ENCODE measurements at regions of chr6 and their contacts with region 1.

Region 1: DNA sequence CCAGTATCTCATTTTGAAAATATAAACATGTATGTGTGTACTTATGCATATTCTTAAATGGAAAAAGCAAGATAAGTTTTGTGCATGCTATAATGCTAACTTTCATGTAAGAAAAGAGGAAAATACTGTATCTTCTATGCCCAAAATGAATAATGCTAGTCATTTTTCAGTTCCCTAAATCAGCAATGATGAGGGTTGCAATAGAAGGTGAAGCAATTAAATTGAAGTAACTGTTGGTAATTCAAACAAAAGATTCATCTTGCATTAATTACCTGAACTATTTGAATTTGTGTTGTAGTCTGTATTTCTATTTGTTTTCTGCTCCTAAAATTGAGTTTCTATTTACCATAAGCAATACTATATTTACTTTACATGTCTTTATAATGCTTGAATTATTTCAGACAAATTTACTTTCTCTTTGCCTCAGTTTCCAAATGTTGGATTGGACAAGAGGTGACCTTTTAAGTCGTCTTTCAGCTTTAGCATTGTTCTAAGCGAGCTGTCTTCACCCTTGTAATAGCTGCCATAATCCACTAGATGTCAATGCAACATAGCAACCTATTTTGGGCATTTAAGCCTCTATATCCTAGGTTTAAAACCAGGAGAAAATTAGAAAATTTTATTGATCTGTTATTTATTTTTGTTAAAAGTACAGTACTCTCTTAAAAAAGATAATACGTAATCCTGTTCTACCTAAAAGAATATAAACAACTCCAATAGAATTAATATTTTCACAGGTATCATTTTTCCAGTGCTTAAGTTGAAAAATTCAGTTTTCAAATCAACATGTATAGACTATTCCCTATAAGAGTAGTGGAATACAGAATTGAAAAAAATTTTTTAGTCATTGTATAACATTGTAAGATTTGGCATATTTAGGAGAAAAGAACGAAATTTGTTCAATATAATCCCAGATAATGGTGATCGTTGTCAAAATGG is 52.3 kb upstream of the IFNGR1 start:
- DNase-seq: peak; percentile 42
- ATAC-seq: peak; percentile 86
- H3K4me3 ChIP-seq: no peak overlapping the region
- H3K27ac ChIP-seq: no peak overlapping the region
- H3K4me1 ChIP-seq: no peaks in the 10 kb centered on the region
- H3K27me3 ChIP-seq: no peaks in the 10 kb centered on the region
- CTCF ChIP-seq: peak; percentile 86; the same call in 1 of the 2 replicates

Region 2: DNA sequence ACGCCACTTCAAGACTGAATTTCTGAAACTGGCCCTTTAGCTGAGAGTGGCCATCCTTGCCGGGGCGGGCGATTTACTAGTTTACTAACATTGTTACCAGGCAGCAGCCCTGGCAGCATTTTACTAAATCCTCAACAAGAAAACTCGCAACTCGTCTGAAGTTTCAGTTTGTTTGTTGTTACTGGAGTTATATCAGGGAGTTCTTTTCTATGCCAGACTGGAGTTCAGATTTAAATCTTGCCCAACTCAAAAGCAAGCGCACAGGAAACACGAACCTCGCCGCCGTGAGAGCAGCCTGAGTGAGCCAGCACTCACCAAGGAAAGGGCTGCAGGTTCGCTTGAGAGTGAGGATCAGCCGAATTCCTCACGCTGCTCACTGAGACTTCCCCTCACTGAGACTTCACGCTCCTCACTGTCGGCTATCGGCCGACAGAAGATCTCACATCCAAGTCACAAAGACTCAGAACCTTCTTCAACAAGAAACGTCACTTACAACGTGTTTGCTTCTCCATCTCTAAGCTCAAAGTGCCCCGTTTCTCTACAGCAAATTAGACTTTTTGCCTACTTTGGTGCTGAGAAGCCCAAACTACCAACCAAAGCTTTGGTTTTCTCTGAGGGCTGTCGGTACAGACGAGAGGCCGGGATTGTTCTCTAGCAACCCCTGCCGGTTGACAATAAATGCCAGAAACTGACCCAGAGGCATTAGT is 143.8 kb after region 1 on chr6:
- CTCF ChIA-PET with region 1: no interaction called
- POLR2A ChIA-PET with region 1: no interaction called
- in situ Hi-C with region 1: no loop called
- intact Hi-C with region 1: loop called (anchors 5 kb)
- DNase-seq: peak; percentile 22
- ATAC-seq: peak; percentile 94
- H3K4me3 ChIP-seq: peak overlapping the region; percentile 20 to 42
- H3K27ac ChIP-seq: no peak overlapping the region
- H3K4me1 ChIP-seq: no peaks in the 10 kb centered on the region; the same call in 1 of the 2 replicates
- H3K27me3 ChIP-seq: peaks cover 11% of the 10 kb centered on the region; the same call in 1 of the 2 replicates
- CTCF ChIP-seq: peak; percentile 83